AG04450 (cell line): ENCODE measurements at regions of chr20 and their contacts with region 1.

Region 1: GRCh38 chr20:37564388-37565133 is 36.9 kb upstream of the BLCAP start:
- DNase-seq: no peak
- H3K4me3 ChIP-seq: no peak overlapping the region
- H3K27ac ChIP-seq: no peak overlapping the region
- H3K27me3 ChIP-seq: peaks cover 53% of the 10 kb centered on the region
- CTCF ChIP-seq: peak; percentile 90

Region 2: GRCh38 chr20:37220731-37221130 is 343.8 kb before region 1 on chr20:
- CTCF ChIA-PET with region 1: no interaction called
- POLR2A ChIA-PET with region 1: no interaction called
- DNase-seq: no peak
- H3K4me3 ChIP-seq: no peak overlapping the region
- H3K27ac ChIP-seq: no peak overlapping the region
- H3K27me3 ChIP-seq: no peaks in the 10 kb centered on the region
- CTCF ChIP-seq: no peak

Region 3: DNA sequence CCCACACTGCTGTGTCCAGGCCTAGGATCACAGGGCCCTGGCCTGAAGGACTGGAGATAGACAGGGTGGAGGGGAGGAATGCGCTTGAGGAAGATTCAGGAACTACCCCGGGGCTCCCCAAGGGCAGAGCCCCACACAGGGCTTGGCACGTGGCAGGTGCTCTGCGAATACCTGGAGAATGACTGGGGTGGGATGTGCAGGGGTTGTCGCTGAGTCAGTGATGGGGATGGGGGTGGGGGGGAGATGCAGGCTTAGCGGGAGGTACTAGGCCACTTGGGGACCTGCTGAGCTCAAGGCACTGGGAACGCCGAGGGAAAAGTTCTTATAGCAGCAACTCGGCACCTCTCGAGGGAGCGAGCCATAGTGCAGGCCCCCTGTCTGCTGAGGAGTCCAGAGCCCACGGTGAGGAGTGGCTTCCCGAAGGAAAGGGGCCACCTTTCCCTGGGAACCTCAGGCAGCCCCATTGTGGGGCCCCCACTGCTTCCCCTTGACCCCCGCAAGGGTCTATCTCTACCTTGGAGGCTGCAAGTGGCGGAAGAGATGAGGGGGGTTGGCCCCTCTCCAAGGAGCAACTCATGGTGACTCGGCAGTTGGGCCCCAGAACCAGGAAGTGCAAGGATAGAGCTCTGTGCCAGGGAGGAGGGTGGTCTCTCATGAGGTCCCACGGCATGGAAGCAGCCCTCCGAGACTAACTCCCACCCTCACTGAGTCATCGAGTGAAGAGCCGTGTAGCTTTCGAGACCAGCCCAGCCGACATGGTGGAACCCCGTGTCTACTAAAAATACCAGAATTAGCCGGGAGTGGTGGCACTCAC is 185.6 kb before region 1 on chr20:
- CTCF ChIA-PET with region 1: no interaction called
- POLR2A ChIA-PET with region 1: no interaction called
- DNase-seq: no peak
- H3K4me3 ChIP-seq: no peak overlapping the region
- H3K27ac ChIP-seq: peak overlapping the region; percentile 65
- H3K27me3 ChIP-seq: no peaks in the 10 kb centered on the region
- CTCF ChIP-seq: no peak

Region 4: DNA sequence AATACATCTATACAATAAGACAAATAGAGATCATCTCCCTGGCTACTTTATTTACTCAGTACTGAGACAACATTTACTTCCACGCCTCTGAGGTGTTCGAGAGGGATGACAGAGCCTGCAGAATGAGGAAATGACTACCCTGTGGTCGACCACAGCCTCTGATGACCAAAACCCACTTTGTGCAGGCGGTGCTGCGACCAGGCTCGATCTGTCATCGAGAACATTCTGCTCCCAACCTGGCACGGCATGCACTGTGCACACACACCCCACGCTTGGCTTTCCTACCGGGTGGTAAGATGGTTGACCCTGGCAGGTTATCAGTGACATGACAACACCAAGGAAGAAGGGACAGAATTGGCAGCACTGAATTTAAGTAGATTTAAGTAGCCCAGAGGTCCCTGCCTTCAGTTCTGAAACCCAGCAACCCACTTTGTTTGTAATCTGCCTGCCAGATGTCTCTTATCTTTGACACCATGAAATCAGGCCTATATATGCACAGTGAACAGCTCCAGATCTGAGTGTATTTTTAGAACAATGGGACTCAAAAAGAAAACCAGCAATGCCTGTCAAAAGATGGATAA is 426.1 kb after region 1 on chr20:
- CTCF ChIA-PET with region 1: interaction called, 43 read pairs
- POLR2A ChIA-PET with region 1: no interaction called
- DNase-seq: peak; percentile 59
- H3K4me3 ChIP-seq: no peak overlapping the region
- H3K27ac ChIP-seq: no peak overlapping the region
- H3K27me3 ChIP-seq: no peaks in the 10 kb centered on the region
- CTCF ChIP-seq: no peak

Region 5: DNA sequence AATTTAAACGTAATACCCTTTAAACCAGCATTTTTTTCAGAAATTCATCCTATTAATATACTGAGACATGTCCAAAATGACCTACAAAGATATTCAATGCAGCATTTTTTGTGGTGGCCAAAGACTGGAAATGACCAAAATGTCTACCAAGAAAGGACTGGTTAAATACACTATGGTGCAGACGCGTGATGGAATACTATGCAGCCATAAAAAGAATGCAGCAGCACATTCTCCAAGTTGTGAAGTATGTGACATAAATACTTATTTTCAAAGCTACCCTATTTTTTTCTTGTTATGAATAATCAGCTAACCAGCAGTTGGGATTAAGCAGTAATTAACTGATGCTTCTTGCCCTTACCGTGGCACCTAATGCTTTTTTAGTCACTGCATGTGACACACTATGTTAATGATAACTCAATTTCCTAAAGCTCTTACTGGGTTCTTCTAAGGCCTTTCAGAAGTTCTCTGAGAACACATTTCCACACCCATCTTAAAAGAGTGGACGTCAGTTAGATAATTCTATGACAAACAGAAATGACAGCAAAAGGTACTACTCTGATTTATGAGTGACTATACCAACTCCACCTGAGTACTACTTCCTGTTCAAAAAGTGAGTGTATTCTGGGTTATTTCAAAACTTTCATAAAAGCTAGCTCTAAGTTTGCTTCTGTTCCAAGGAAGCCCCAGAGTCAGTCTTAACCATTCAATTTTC is 443.8 kb after region 1 on chr20:
- CTCF ChIA-PET with region 1: interaction called, 11 read pairs
- POLR2A ChIA-PET with region 1: no interaction called
- DNase-seq: no peak
- H3K4me3 ChIP-seq: no peak overlapping the region
- H3K27ac ChIP-seq: no peak overlapping the region
- H3K27me3 ChIP-seq: no peaks in the 10 kb centered on the region
- CTCF ChIP-seq: no peak

Region 6: GRCh38 chr20:38049800-38050199 is 485.2 kb after region 1 on chr20:
- CTCF ChIA-PET with region 1: interaction called, 20 read pairs
- POLR2A ChIA-PET with region 1: no interaction called
- DNase-seq: peak; percentile 48
- H3K4me3 ChIP-seq: no peak overlapping the region
- H3K27ac ChIP-seq: peak overlapping the region; percentile 47
- H3K27me3 ChIP-seq: no peaks in the 10 kb centered on the region
- CTCF ChIP-seq: no peak

Region 7: DNA sequence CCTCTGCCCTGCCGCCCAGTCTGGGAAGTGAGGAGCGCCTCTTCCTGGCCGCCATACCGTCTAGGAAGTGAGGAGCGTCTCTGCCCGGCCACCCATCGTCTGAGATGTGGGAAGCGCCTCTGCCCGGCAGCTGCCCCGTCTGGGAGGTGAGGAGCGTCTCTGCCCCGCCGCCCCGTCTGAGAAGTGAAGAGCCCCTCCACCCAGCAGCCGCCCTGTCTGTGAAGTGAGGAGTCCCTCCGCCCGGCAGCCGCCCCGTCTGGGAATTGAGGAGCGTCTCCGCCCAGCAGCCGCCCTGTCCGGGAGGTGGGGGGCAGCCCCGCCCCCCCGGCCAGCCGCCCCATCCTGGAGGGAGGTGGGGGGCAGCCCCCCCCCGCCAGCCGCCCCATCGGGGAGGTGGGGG is 842.8 kb after region 1 on chr20:
- CTCF ChIA-PET with region 1: interaction called, 10 read pairs
- POLR2A ChIA-PET with region 1: no interaction called
- DNase-seq: no peak
- H3K4me3 ChIP-seq: no peak overlapping the region
- H3K27ac ChIP-seq: no peak overlapping the region
- H3K27me3 ChIP-seq: no peaks in the 10 kb centered on the region
- CTCF ChIP-seq: no peak